ENCODE measurements at regions of chr21 and their contacts with region 1.

Region 1: GRCh38 chr21:37220981-37221664 is 46.0 kb downstream of the VPS26C start:
- DNase-seq: peak; percentile 76 to 95 (median 88)
- ATAC-seq: peak; percentile 90
- H3K4me3 ChIP-seq: peak overlapping the region; percentile 83
- H3K4me3 Mint-ChIP-seq: peak overlapping the region; percentile 85 to 95 (median 92)
- H3K27ac ChIP-seq: peak overlapping the region; percentile 81
- H3K27ac Mint-ChIP-seq: peak overlapping the region; percentile 85 to 95 (median 91)
- H3K4me1 ChIP-seq: peaks cover 25 to 33% of the 10 kb centered on the region in 2 donors
- H3K4me1 Mint-ChIP-seq: peaks cover 17 to 65% (median 56%) of the 10 kb centered on the region in 7 donors
- H3K27me3 ChIP-seq: no peaks in the 10 kb centered on the region
- H3K27me3 Mint-ChIP-seq: no peaks in the 10 kb centered on the region

Region 2: DNA sequence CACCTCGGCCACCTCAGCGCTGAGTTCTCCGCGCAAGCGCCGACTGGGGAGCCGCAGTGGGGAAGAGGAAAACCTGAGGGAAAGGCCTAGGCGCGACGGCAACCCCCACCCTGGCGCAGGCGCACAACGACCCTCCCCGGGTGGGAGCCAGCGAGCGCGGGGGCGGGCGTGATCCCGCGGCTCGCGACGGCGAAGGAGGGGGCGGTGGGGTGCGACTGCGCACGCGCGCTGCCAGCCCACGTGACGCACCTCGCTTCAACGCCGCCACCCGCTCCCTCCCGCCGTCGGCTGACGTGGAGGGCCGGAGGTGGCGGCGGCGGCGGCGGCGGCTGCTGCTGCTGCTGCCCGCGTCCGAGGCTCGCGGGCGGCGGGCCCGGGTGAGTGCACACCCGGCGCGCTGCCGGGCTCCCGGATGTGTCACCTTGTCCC is 148.1 kb before region 1 on chr21 and contains the starts of genes PIGP and TTC3:
- CTCF ChIA-PET with region 1: no interaction called
- POLR2A ChIA-PET with region 1: no interaction called
- intact Hi-C with region 1: loop called (anchors 1 to 2 kb)
- DNase-seq: peak; percentile 93 to 99 (median 97)
- ATAC-seq: peak; percentile 79
- H3K4me3 ChIP-seq: peak within 1 kb of the TSS; percentile 76
- H3K4me3 Mint-ChIP-seq: peak within 1 kb of the TSS; percentile 88 to 100 (median 98)
- H3K27ac ChIP-seq: peak within 1 kb of the TSS; percentile 97
- H3K27ac Mint-ChIP-seq: peak within 1 kb of the TSS; percentile 91 to 100 (median 97)
- H3K4me1 ChIP-seq: peaks cover 22 to 23% of the 10 kb centered on the region in 2 donors
- H3K4me1 Mint-ChIP-seq: peaks cover 30 to 66% (median 59%) of the 10 kb centered on the region in 7 donors
- H3K27me3 ChIP-seq: no peaks in the 10 kb centered on the region
- H3K27me3 Mint-ChIP-seq: peaks cover 0 to 6% (median 0%) of the 10 kb centered on the region in 5 donors
- total RNA-seq, gene PIGP: 9.1 to 26.7 (median 15.3) TPM
- total RNA-seq, gene TTC3: 66.6 to 208 (median 154) TPM

Region 3: DNA sequence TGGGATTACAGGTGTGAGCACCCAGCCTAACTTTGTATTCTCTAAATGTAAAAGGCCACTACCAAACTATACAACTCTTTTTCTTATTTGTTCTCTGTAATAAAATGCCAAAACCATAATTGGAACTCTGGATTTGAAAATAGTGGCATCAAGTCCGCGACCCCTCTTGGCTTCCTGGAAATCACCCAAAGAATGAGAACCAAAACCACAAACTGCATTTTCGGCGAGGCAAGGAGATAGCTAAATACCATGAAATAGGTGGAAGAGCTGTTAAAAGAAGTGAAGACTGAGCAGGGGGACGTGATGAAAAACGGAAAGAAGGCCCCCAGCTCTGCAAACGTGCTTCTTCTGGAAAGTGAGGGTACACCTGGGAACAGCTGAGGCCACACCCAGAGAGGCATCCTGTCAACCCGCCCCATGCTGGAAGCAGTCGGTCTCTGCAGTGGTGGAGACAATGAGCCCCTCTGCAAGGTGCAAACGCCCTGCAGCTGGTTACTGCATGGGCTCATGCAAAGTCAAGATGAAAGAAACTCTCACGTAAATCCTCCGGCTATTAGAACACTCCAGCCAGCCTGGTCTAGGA is 23.5 kb after region 1 on chr21:
- CTCF ChIA-PET with region 1: no interaction called
- POLR2A ChIA-PET with region 1: no interaction called
- intact Hi-C with region 1: loop called in 1 of 2 experiments (anchors 2 kb)
- DNase-seq: peak in 1 of 9 donors; percentile 11
- ATAC-seq: peak; percentile 18
- H3K4me3 ChIP-seq: no peak overlapping the region
- H3K4me3 Mint-ChIP-seq: peak overlapping the region; percentile 54 to 87 (median 73)
- H3K27ac ChIP-seq: peak overlapping the region; percentile 39
- H3K27ac Mint-ChIP-seq: peak overlapping the region; percentile 60 to 88 (median 78)
- H3K4me1 ChIP-seq: peaks cover 20 to 21% of the 10 kb centered on the region in 2 donors
- H3K4me1 Mint-ChIP-seq: peaks cover 56 to 78% (median 72%) of the 10 kb centered on the region in 7 donors
- H3K27me3 ChIP-seq: no peaks in the 10 kb centered on the region
- H3K27me3 Mint-ChIP-seq: no peaks in the 10 kb centered on the region

Region 4: GRCh38 chr21:37463083-37463801 is 242.1 kb after region 1 on chr21:
- CTCF ChIA-PET with region 1: no interaction called
- POLR2A ChIA-PET with region 1: no interaction called
- intact Hi-C with region 1: loop called (anchors 1 to 2 kb)
- DNase-seq: peak in 6 of 9 donors; percentile 20 to 45 (median 31)
- ATAC-seq: peak; percentile 85
- H3K4me3 ChIP-seq: no peak overlapping the region
- H3K4me3 Mint-ChIP-seq: peak overlapping the region in 9 of 10 donors; percentile 3 to 80 (median 67)
- H3K27ac ChIP-seq: no peak overlapping the region
- H3K27ac Mint-ChIP-seq: peak overlapping the region; percentile 24 to 93 (median 81)
- H3K4me1 ChIP-seq: peaks cover 37 to 39% of the 10 kb centered on the region in 2 donors
- H3K4me1 Mint-ChIP-seq: peaks cover 56 to 98% (median 87%) of the 10 kb centered on the region in 7 donors
- H3K27me3 ChIP-seq: no peaks in the 10 kb centered on the region
- H3K27me3 Mint-ChIP-seq: no peaks in the 10 kb centered on the region

Region 5: DNA sequence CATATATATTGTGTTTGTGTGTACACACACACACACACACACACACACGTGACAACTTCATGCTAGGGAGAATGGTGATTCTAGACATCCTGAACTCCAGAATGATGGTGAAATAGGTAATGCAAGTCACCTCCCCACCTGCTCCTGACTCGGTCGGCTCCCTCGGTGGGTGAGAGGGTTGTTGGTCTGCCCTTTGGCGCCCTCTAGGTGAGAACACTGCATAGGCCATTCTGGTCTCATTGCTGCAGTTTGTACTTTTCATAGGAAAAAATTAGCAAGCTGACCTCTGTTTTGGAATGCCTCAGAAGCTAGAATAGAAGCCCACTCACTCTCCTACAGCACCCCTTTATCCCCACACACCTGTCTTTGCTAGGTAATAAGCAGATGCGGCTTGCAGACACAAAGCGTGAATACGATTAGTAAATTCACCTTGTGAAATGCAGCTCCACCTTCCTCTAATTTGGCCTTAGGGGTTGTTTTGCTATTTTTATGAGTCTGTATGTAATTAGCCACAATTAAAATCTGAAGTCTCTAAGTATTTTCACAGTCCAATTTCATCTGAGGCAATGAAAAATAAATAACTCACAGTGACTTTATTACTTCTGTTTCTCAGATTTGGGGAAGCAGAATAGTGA is 905.7 kb after region 1 on chr21:
- CTCF ChIA-PET with region 1: no interaction called
- POLR2A ChIA-PET with region 1: no interaction called
- intact Hi-C with region 1: loop called in 1 of 2 experiments (anchors 5 kb)
- DNase-seq: peak in 8 of 9 donors; percentile 11 to 49 (median 25)
- ATAC-seq: peak; percentile 57
- H3K4me3 ChIP-seq: no peak overlapping the region
- H3K4me3 Mint-ChIP-seq: no peak overlapping the region
- H3K27ac ChIP-seq: no peak overlapping the region
- H3K27ac Mint-ChIP-seq: no peak overlapping the region
- H3K4me1 ChIP-seq: no peaks in the 10 kb centered on the region
- H3K4me1 Mint-ChIP-seq: peaks cover 0 to 2% (median 0%) of the 10 kb centered on the region in 7 donors
- H3K27me3 ChIP-seq: no peaks in the 10 kb centered on the region
- H3K27me3 Mint-ChIP-seq: peaks cover 10 to 25% (median 17%) of the 10 kb centered on the region in 5 donors